ENCODE measurements at regions of chr19 and their contacts with region 1.

Region 1: DNA sequence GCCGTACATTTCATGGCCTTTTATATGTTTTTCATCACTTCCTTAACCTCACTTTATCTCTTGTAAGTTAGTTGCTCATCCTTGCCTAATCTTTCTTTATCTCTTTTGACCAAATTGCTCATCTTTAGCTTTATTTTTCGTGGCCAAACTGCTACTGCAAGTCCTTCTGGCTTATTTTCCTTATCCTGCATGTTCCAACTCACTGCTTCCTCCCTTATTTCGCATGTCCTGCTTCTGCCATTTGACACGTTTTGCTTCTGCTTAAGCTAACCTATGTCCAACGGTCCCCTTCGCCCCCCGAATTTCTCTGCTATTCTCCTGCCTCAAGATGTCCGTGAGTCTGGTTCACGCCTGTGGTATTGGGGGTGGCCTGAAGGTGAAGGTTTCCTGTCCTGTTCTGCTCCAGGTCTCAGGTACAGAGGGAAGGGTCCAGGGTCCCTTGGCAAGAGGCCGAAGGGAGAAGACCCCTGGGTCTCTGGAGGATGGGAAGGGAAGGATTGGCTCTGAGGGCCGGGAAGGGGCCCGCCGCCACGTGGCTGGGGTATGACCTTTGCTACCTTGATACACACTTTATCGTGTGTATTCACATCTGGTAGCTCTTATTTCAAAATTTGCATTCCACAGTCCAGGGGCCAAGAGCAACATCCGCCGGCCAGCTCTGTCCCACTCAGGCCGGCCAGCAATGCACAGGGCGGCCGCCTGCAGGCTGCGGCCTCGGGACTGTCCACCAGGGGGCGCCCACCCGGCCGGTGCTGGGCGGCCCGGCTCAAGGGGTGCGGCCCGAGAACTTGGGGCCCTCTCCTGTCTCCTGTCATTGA is 2.9 kb upstream of the C19orf85 start:
- DNase-seq: peak; percentile 49 to 64 (median 55)
- H3K4me3 ChIP-seq: no peak overlapping the region
- H3K4me3 Mint-ChIP-seq: no peak overlapping the region
- H3K27ac ChIP-seq: no peak overlapping the region
- H3K27ac Mint-ChIP-seq: peak overlapping the region in 1 of 7 donors; percentile 75
- H3K4me1 ChIP-seq: peaks cover under 1 to 5% of the 10 kb centered on the region in 2 donors
- H3K4me1 Mint-ChIP-seq: peaks cover 4% of the 10 kb centered on the region
- H3K27me3 ChIP-seq: no peaks in the 10 kb centered on the region
- H3K27me3 Mint-ChIP-seq: peaks cover 5 to 11% (median 10%) of the 10 kb centered on the region in 3 donors
- CTCF ChIP-seq: peak; percentile 99

Region 2: GRCh38 chr19:55503502-55504251 is 36.2 kb after region 1 on chr19:
- intact Hi-C with region 1: loop called (anchors 5 kb)
- DNase-seq: peak; percentile 91 to 93 (median 92)
- H3K4me3 ChIP-seq: peak overlapping the region; percentile 24 to 77 (median 51)
- H3K4me3 Mint-ChIP-seq: peak overlapping the region; percentile 80 to 90
- H3K27ac ChIP-seq: peak overlapping the region; percentile 28 to 48
- H3K27ac Mint-ChIP-seq: peak overlapping the region; percentile 2 to 89 (median 80)
- H3K4me1 ChIP-seq: peaks cover 5 to 11% of the 10 kb centered on the region in 2 donors
- H3K4me1 Mint-ChIP-seq: peaks cover 9% of the 10 kb centered on the region
- H3K27me3 ChIP-seq: peaks cover 0 to 3% of the 10 kb centered on the region in 2 donors
- H3K27me3 Mint-ChIP-seq: peaks cover 5 to 14% (median 11%) of the 10 kb centered on the region in 3 donors
- CTCF ChIP-seq: peak; percentile 100